Thyroid gland (tissue), 4 donors: ENCODE measurements at regions of chr10 and their contacts with region 1.

Region 1: DNA sequence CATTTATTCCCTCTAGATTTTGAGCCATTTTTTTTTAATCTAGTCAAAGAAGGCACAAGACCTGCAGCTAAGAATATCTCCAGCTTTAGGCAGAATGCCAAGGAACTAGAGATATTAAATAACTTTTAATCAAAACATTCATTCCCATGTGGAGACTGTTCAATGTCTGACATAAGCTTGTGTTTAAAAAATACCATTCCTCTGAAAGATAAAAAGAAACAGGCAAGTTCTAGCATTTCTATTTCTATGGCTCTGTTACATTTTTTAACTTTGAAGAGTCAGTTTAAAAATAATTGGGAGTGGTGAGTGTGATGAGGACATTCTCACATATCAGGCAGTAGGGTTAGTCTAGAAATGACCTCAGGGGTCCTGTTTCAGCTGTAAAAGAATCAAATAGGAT is 48.0 kb downstream of the RHOBTB1 start:
- DNase-seq: no peak
- H3K4me3 ChIP-seq: no peak overlapping the region
- H3K27ac ChIP-seq: no peak overlapping the region
- H3K4me1 ChIP-seq: no peaks in the 10 kb centered on the region
- H3K27me3 ChIP-seq: no peaks in the 10 kb centered on the region
- CTCF ChIP-seq: no peak
- POLR2A ChIP-seq: no peak

Region 2: GRCh38 chr10:60944159-60944909 is 48.3 kb after region 1 on chr10 and contains the start of gene RHOBTB1:
- intact Hi-C with region 1: loop called (anchors 10 kb)
- DNase-seq: peak; percentile 74 to 79
- H3K4me3 ChIP-seq: peak within 1 kb of the TSS; percentile 47 to 94 (median 84)
- H3K27ac ChIP-seq: peak within 1 kb of the TSS; percentile 76 to 97 (median 96)
- H3K4me1 ChIP-seq: peaks cover 0 to 11% of the 10 kb centered on the region in 2 donors
- H3K27me3 ChIP-seq: no peaks in the 10 kb centered on the region
- CTCF ChIP-seq: no peak
- POLR2A ChIP-seq: peak in 1 of 2 donors; percentile 72
- total RNA-seq, gene RHOBTB1: 6.8 to 10.5 (median 9.1) TPM